T-cell (primary cell): ENCODE measurements at regions of chr14 and their contacts with region 1.

Region 1: DNA sequence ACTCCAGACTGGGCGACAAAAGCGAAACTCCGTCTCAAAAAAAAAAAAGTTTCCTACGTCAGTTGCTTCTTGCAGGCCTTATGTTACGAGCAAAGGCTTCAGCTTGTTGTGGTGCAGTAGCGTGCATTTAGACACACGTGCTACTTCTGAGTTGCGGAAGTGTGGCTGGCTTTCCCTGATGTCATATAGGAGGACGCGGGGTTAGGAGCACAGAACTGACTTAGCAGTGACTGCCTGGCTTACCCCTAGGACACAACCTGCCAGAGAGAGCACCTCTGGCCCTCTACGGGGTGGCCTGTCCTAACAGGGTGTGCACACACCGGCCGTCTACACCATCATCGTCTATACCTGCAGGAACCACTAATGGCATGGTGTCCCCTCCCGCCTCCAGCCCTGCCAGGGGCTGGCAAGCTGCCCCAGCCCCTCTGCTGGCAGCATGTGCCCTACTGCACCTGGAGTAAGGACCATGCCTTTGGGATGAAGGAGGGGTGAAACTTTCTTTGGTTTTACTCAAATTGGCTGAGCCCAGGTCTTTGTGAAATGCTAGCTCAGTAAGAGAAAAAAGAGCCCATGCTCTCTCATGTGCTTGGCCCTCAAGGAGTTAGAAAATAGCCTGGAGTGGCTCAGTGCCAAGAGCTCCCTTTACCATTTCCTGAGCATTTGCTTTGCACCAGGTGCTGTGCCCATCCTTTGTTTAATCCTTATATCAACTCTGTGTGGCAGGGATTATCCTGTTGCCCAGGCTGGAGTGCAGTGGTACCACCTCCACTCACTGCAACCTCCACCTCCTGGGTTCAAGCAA is 1.7 kb upstream of the GPR68 start:
- DNase-seq: peak in 34 of 35 experiments; percentile 63 to 95 (median 82)
- ATAC-seq: peak; percentile 65 to 82 (median 66)
- H3K4me3 ChIP-seq: no peak overlapping the region
- H3K4me3 Mint-ChIP-seq: peak overlapping the region; percentile 60 to 82 (median 62)
- H3K27ac ChIP-seq: peak overlapping the region; percentile 99
- H3K27ac Mint-ChIP-seq: peak overlapping the region; percentile 89 to 90
- H3K4me1 ChIP-seq: peaks cover 58 to 98% of the 10 kb centered on the region in 2 experiments
- H3K4me1 Mint-ChIP-seq: peaks cover 87 to 93% (median 87%) of the 10 kb centered on the region in 3 donors
- H3K27me3 ChIP-seq: no peaks in the 10 kb centered on the region
- H3K27me3 Mint-ChIP-seq: no peaks in the 10 kb centered on the region

Region 2: GRCh38 chr14:90871605-90872233 is 374.5 kb before region 1 on chr14:
- CTCF ChIA-PET with region 1: no interaction called
- POLR2A ChIA-PET with region 1: no interaction called
- DNase-seq: no peak
- ATAC-seq: no peak
- H3K4me3 ChIP-seq: no peak overlapping the region
- H3K4me3 Mint-ChIP-seq: no peak overlapping the region
- H3K27ac ChIP-seq: no peak overlapping the region
- H3K27ac Mint-ChIP-seq: no peak overlapping the region
- H3K4me1 ChIP-seq: no peaks in the 10 kb centered on the region
- H3K4me1 Mint-ChIP-seq: no peaks in the 10 kb centered on the region
- H3K27me3 ChIP-seq: no peaks in the 10 kb centered on the region
- H3K27me3 Mint-ChIP-seq: no peaks in the 10 kb centered on the region

Region 3: DNA sequence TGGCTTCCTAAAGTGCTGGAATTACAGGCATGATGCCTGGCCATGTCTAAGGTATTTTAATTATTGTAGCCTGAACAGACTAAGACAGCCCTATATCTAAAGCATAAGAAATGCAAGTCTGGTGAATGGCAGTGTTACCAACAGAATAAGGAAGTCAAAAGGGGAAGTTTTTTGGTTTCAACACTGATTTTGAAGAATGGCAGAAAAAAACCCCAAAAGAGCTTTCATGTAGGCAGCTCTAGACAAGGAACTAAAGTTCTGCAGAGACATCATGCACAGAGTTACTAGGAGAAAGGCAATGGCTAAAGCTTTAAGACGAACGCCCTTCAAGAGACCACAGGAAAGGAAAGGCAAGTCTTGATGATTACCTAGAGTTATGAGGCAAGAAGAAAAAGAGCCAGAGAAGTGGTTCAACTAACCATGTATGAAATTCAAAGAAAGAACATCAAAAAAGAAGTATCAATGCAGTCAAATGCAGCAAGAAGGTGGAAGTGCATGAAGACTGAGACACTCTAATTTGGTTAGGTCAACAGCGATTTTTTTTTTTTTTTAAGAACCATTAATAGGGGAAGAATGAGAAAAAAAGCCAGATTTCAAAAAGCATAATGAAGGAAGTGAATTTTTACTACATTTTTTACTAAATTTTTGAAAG is 236.6 kb before region 1 on chr14:
- CTCF ChIA-PET with region 1: no interaction called
- POLR2A ChIA-PET with region 1: no interaction called
- DNase-seq: peak in 1 of 35 experiments; percentile 50
- ATAC-seq: peak; percentile 58 to 83 (median 70)
- H3K4me3 ChIP-seq: no peak overlapping the region
- H3K4me3 Mint-ChIP-seq: peak overlapping the region in 2 of 3 donors; percentile 13 to 33
- H3K27ac ChIP-seq: no peak overlapping the region
- H3K27ac Mint-ChIP-seq: peak overlapping the region; percentile 20 to 34
- H3K4me1 ChIP-seq: peaks cover 5 to 29% of the 10 kb centered on the region in 2 experiments
- H3K4me1 Mint-ChIP-seq: peaks cover 42 to 47% (median 43%) of the 10 kb centered on the region in 3 donors
- H3K27me3 ChIP-seq: no peaks in the 10 kb centered on the region
- H3K27me3 Mint-ChIP-seq: no peaks in the 10 kb centered on the region

Region 4: GRCh38 chr14:91219517-91220389 is 26.5 kb before region 1 on chr14:
- CTCF ChIA-PET with region 1: no interaction called
- POLR2A ChIA-PET with region 1: no interaction called
- DNase-seq: no peak
- ATAC-seq: no peak
- H3K4me3 ChIP-seq: no peak overlapping the region
- H3K4me3 Mint-ChIP-seq: no peak overlapping the region
- H3K27ac ChIP-seq: no peak overlapping the region
- H3K27ac Mint-ChIP-seq: peak overlapping the region; percentile 48 to 67
- H3K4me1 ChIP-seq: peaks cover 2 to 32% of the 10 kb centered on the region in 2 experiments
- H3K4me1 Mint-ChIP-seq: peaks cover 42 to 51% (median 42%) of the 10 kb centered on the region in 3 donors
- H3K27me3 ChIP-seq: no peaks in the 10 kb centered on the region
- H3K27me3 Mint-ChIP-seq: no peaks in the 10 kb centered on the region

Region 5: DNA sequence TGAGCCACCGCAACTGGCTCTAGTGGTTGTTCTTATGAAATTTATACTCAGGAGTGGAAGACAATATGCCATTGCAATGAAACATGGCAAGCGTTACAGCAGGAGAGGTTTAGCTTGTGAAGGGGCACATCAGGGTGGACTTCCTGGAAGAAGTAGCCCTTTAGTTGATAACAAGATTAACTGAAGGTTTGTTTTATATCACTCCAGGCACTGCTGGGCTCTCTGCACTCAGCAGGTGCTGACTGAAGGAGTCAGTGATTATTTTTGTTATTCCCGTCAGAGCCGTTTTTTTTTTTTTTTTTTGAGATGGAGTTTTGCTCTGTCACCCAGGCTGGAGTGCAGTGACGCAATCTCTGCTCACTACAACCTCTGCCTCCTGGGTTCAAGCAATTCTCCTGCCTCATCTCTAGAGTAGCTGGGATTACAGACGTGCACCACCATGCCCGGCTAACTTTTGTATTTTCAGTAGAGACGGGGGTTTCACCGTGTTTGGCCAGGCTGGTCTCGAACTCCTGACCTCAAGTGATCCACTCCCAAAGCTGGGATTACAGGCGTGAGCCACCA is 15.8 kb after region 1 on chr14:
- CTCF ChIA-PET with region 1: interaction called, 6 to 15 read pairs
- POLR2A ChIA-PET with region 1: interaction called, 4 to 5 read pairs
- DNase-seq: no peak
- ATAC-seq: no peak
- H3K4me3 ChIP-seq: no peak overlapping the region
- H3K4me3 Mint-ChIP-seq: no peak overlapping the region
- H3K27ac ChIP-seq: no peak overlapping the region
- H3K27ac Mint-ChIP-seq: peak overlapping the region in 1 of 2 donors; percentile 58
- H3K4me1 ChIP-seq: peaks cover 5 to 37% of the 10 kb centered on the region in 2 experiments
- H3K4me1 Mint-ChIP-seq: peaks cover 42 to 67% (median 52%) of the 10 kb centered on the region in 3 donors
- H3K27me3 ChIP-seq: no peaks in the 10 kb centered on the region
- H3K27me3 Mint-ChIP-seq: no peaks in the 10 kb centered on the region